Natural killer cell (primary cell): ENCODE measurements at regions of chr1 and their contacts with region 1.

Region 1: DNA sequence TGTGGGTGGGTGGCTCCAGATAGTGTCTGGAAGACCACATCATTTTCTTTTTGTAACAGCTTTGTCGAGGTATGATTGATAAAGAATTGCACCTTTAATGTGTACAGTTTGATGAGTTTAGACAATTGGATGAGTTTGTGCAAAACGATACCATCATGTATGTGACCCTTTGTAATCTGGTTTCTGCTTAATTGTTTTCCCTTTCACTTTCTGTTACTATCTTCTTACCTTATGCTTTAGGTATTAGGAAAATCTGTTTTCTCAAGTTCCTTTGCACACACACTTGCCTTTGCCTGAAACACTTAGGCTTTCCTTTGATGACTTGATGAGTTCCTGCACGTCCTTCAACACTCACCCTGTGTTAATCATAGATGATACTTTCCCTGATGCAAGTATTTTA is 6.8 kb downstream of the OR10Z1 start:
- DNase-seq: no peak
- ATAC-seq: no peak
- H3K4me3 ChIP-seq: no peak overlapping the region
- H3K4me3 Mint-ChIP-seq: no peak overlapping the region
- H3K27ac ChIP-seq: no peak overlapping the region
- H3K27ac Mint-ChIP-seq: no peak overlapping the region
- H3K4me1 ChIP-seq: no peaks in the 10 kb centered on the region
- H3K4me1 Mint-ChIP-seq: peaks cover 0 to 4% of the 10 kb centered on the region in 2 donors
- H3K27me3 ChIP-seq: no peaks in the 10 kb centered on the region
- H3K27me3 Mint-ChIP-seq: peaks cover 18 to 30% of the 10 kb centered on the region in 2 donors
- CTCF ChIP-seq: no peak

Region 2: DNA sequence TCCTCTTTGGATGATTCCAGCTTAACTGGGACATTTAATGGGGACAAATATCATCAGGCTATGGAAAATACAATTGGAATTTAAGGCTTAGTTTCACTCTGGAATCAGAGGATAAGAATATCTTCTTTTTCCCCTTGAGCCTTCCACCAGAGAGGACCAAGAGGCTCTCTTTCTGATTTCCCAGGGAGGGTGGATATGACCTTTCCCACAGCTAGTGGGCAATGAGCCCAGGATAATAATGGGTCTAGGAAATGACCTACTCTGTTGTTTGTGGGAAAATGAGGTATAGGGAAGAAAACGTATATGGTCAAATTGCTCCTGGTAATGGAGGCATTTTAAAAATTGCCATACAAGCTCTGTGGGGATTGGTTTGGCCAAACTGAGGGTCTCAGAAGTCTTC is 59.6 kb before region 1 on chr1:
- intact Hi-C with region 1: loop called (anchors 10 kb)
- DNase-seq: no peak
- ATAC-seq: no peak
- H3K4me3 ChIP-seq: no peak overlapping the region
- H3K4me3 Mint-ChIP-seq: no peak overlapping the region
- H3K27ac ChIP-seq: no peak overlapping the region
- H3K27ac Mint-ChIP-seq: no peak overlapping the region
- H3K4me1 ChIP-seq: no peaks in the 10 kb centered on the region
- H3K4me1 Mint-ChIP-seq: no peaks in the 10 kb centered on the region
- H3K27me3 ChIP-seq: no peaks in the 10 kb centered on the region
- H3K27me3 Mint-ChIP-seq: peaks cover 22 to 44% of the 10 kb centered on the region in 2 donors
- CTCF ChIP-seq: no peak